Sciatic nerve (tissue), 2 donors: ENCODE measurements at regions of chr1 and their contacts with region 1.

Region 1: DNA sequence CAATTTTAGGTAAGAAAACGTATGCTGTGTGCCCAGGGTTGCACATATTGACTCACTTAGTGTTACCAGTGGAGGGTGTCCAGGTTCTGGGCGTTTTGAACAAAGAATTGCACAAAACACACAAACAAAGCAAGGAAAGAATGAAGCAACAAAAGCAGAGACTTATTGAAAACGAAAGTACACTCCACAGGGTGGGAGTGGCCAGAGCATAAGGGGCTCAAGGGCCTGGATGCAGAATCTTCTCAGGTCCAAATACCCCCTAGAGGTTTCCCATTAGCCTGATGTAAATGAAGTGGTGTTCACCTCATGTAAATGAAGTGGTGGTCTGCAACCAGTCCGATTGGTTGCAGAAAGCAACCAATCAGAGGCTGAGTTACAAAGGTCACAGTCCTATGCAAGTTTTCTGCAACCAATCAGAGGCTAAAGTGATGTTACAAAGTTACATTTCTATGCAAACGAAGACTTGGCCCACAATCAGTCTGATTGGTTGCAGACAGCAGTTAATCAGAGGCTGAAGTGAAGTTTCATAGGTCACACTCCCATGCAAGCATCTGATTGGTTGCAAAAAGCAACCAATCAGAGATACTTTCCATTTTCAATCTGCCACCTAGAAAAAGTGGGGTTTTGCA is 228.3 kb downstream of the ST6GALNAC3 start:
- DNase-seq: no peak
- ATAC-seq: no peak

Region 2: DNA sequence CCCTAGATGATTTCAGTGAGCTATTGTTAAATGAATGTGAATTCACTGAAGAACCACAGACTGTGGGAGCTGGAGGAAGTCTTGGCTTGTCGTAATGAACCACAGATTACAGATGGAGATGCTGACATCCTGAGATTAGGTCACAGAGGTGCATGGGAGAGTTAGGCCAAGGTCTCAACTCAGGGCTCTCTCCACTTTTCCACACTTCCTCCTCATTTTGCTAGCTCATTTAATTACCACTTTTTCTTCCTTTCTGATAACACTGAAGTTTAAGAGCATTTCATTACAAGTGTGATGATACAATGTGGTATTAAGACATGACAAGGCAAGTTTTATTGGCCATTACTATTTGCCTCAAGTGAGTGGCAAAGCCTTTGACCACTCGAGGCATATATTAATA is 197.5 kb before region 1 on chr1:
- intact Hi-C with region 1: no loop called
- DNase-seq: no peak
- ATAC-seq: no peak

Region 3: DNA sequence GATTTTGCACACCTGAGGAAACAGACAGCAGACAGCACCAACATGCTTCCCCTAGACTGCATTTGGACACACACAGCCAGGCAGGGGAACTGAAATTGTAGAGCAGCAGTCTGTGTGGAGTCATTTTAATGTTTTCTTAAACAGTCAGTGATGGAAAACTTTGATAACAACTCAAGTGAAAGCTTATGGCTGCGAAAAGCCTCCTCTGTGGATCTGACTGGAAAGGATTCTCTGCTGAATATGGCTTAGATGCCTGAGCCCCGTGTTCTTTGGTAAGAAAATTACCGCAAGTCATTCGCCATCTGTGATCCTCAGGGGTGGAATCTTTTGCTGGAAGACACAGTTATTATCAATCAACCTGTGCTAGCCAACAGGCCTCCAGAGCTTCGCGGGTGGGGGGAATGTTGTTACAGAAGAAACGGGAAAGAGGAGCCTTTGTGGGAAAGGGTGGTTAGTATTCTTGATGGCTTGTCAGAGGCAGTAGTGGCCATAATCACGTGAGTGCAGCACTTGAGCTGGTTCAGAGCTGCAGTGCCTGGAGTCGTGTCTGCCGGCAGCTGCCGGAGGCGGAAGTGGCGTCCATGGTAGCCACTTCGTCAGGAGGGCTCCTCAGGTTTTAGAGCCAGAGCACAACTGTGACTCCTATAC is 23.6 kb before region 1 on chr1:
- intact Hi-C with region 1: loop called (anchors 1 kb)
- DNase-seq: no peak
- ATAC-seq: peak; percentile 50

Region 4: DNA sequence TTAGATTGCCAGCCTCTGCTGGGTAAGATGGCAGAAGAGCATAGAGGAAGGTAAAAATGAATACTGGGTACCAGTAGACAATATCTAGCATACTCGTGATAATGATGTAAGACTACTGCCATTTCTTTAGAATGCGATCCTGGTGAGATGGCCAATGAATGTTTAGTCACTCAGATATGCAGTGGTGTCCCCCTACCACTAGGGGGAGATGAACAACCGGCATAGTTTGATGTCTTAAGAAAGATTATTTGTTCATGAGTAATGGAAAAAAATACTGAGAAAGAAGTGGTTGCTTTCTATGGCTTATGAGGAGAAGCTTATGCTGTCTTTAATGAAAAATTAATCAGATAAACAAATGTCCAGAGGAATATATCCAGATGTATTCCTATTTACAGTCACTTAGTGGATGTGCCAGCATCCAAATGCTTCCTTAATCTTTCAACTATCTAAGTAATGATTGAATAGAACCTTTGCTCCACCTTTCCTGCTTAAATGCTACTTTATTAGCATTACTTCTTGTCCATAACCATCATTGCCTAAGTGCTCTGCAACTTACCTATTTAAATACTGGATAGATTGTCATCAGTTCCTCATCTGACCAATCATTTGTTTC is 28.3 kb after region 1 on chr1:
- intact Hi-C with region 1: no loop called
- DNase-seq: no peak
- ATAC-seq: peak; percentile 66

Region 5: DNA sequence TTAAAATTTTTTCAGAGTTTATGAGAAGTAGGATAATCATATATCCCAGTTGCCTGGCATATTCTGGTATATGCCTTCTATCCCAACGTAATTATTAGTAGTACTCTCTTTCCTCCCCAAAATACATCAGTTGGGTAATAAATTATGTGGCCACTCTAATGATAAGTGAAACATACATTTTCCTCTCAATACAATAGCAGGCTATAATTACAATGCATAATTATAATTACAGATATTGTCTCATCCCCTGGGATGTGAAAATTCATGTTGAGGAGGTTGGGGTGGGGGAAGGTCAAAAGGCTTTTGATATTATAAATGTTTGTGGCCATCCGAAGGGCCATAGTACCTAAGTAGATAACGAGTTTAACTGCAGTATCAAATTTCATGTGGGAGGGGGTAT is 48.8 kb after region 1 on chr1:
- intact Hi-C with region 1: loop called (anchors 2 kb)
- DNase-seq: no peak
- ATAC-seq: no peak